Activated B cell treated with CpG ODN at 0.5 μM for 24 hours (primary cell): ENCODE measurements at regions of chr7 and their contacts with region 1.

Region 1: GRCh38 chr7:21898265-21898930 is 47.3 kb downstream of the CDCA7L start:
- DNase-seq: no peak
- ATAC-seq: peak; percentile 92
- H3K4me3 Mint-ChIP-seq: peak overlapping the region; percentile 81
- H3K27ac Mint-ChIP-seq: peak overlapping the region; percentile 97
- H3K4me1 Mint-ChIP-seq: peaks cover 24% of the 10 kb centered on the region
- H3K27me3 Mint-ChIP-seq: no peaks in the 10 kb centered on the region
- CTCF ChIP-seq: no peak

Region 2: DNA sequence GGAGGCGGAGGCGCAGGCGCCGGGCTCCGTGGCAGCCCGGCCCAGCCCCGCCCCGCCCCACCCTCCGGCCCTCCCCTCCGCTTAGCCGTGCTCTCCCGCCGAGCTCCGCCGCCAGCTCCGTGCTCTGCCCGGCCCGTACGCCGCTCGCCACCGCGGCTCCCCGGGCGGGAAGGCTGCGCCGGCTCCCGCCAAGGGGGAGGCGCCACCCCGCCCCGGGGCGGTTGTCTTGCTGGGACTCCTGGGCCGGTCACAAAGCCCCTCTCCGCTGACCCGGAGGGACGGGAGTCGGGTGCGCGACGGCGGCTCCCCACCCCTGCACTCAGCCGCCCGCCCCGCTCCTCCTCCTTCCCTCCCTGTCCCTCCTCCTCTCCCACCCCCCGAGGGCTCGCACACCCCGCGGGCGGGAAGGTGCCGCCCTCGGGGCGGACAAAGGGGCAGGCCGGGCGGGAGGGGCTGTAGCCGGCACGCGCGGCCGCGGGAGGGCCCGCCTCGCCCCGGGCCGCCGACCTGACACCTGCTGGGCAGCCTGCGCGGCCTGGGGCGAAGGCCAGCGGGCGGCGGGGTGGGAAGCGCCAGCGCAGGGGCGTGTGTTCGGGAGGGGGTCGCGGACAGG is 1100.2 kb before region 1 on chr7:
- CTCF ChIA-PET with region 1: no interaction called
- POLR2A ChIA-PET with region 1: no interaction called
- intact Hi-C with region 1: loop called (anchors 5 kb)
- DNase-seq: no peak
- ATAC-seq: peak; percentile 82
- H3K4me3 Mint-ChIP-seq: peak overlapping the region; percentile 76
- H3K27ac Mint-ChIP-seq: no peak overlapping the region
- H3K4me1 Mint-ChIP-seq: peaks cover 22% of the 10 kb centered on the region
- H3K27me3 Mint-ChIP-seq: peaks cover 42% of the 10 kb centered on the region
- CTCF ChIP-seq: no peak

Region 3: GRCh38 chr7:21507626-21508343 is 390.6 kb before region 1 on chr7:
- CTCF ChIA-PET with region 1: no interaction called
- POLR2A ChIA-PET with region 1: no interaction called
- intact Hi-C with region 1: loop called (anchors 10 kb)
- DNase-seq: no peak
- ATAC-seq: no peak
- H3K4me3 Mint-ChIP-seq: no peak overlapping the region
- H3K27ac Mint-ChIP-seq: no peak overlapping the region
- H3K4me1 Mint-ChIP-seq: no peaks in the 10 kb centered on the region
- H3K27me3 Mint-ChIP-seq: no peaks in the 10 kb centered on the region
- CTCF ChIP-seq: no peak

Region 4: DNA sequence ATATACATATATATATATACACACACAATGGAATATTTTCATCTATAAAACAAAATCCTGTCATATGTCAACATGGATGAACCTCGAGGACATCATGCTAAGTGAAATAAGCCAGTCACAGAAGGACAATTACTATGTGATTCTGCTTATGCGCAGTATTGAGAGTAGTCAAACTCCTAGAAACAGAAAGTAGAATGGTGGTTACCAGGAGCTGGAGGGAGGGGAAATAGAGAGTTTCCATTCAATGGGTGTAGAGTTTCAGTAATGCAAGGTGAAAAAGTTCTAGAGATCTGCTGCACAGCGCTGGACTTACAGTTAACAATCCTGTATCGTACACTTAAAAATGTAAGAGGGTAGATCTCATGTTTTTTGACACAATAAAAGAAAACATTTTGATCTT is 134.6 kb before region 1 on chr7:
- CTCF ChIA-PET with region 1: no interaction called
- POLR2A ChIA-PET with region 1: no interaction called
- intact Hi-C with region 1: no loop called
- DNase-seq: no peak
- ATAC-seq: no peak
- H3K4me3 Mint-ChIP-seq: no peak overlapping the region
- H3K27ac Mint-ChIP-seq: no peak overlapping the region
- H3K4me1 Mint-ChIP-seq: no peaks in the 10 kb centered on the region
- H3K27me3 Mint-ChIP-seq: peaks cover 10% of the 10 kb centered on the region
- CTCF ChIP-seq: no peak

Region 5: DNA sequence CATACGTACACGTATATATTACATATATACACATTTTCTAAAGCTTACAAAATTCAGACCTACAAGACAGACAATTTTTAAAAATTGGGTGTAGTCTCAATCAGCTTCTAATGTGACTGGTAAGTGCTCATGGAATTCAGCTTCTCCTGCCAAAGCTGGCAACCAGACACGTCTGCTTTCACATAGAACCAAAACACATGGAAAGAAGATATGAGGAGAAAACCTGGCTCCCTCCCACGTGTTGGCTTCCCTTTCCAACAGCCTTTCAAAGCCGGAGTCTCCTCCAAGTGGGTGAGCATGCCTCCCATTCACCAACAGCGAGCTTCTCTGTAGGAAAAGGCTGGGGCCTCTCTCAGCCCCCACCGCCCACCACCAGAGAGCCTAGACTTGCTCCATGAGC is 13.9 kb after region 1 on chr7:
- CTCF ChIA-PET with region 1: no interaction called
- POLR2A ChIA-PET with region 1: interaction called, 5 read pairs
- intact Hi-C with region 1: loop called (anchors 2 kb)
- DNase-seq: no peak
- ATAC-seq: no peak
- H3K4me3 Mint-ChIP-seq: no peak overlapping the region
- H3K27ac Mint-ChIP-seq: peak overlapping the region; percentile 74
- H3K4me1 Mint-ChIP-seq: peaks cover 43% of the 10 kb centered on the region
- H3K27me3 Mint-ChIP-seq: no peaks in the 10 kb centered on the region
- CTCF ChIP-seq: no peak

Region 6: DNA sequence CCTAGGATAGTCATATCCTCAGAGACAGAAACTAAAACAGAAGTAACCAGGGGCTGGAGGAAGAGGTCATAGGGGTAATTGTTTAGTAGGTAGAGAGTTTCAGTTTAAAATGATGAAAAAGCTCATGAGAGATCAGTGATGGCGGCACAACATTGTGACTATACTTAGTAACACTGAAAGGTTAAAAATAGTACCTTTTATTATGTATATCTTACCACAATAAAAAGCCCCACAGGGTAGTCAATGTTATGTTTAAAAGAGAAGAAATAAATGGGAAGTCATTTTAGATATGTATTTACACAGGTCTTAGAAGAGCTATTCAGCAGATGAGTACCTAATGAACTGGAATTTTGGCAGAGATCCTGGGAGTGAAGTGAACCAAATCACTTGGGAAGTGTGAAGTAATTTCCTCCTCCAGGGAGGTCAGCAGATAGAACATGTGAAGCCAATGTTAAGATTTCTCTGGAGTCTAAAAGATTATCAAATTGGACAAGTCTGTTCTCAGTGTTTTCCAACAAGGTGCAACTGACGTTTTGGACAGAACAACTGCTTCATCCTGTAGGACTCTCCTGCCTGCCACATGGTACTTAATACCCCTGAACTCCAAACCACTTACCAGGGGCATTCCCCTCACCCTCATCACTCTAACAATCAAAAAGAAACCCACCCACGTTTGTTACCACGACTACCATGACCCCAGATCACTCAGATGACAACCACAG is 40.9 kb after region 1 on chr7:
- CTCF ChIA-PET with region 1: no interaction called
- POLR2A ChIA-PET with region 1: interaction called, 4 read pairs
- intact Hi-C with region 1: loop called (anchors 1 kb)
- DNase-seq: no peak
- ATAC-seq: peak; percentile 55
- H3K4me3 Mint-ChIP-seq: peak overlapping the region; percentile 64
- H3K27ac Mint-ChIP-seq: peak overlapping the region; percentile 75
- H3K4me1 Mint-ChIP-seq: peaks cover 93% of the 10 kb centered on the region
- H3K27me3 Mint-ChIP-seq: no peaks in the 10 kb centered on the region
- CTCF ChIP-seq: no peak

Region 7: DNA sequence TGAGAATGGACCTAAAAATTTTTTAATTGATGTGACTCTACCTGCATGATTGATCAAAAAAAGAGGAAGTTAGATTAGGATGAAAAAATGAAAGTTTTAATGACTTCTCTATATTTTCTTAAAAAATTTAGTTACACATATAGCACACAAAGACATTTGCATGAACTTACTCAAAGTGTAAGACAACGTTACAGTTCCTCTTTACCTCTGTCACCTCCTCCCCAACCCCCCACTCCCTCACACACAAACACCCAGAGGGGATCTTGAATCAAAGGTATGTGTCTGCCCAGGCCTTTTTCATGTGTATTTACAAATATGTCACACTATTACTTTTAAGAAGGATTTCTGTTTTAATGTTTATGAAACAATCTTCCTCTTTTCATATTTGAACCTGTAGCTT is 67.9 kb after region 1 on chr7:
- CTCF ChIA-PET with region 1: no interaction called
- POLR2A ChIA-PET with region 1: interaction called, 3 read pairs
- intact Hi-C with region 1: loop called (anchors 1 kb)
- DNase-seq: peak; percentile 31
- ATAC-seq: peak; percentile 97
- H3K4me3 Mint-ChIP-seq: peak overlapping the region; percentile 66
- H3K27ac Mint-ChIP-seq: peak overlapping the region; percentile 87
- H3K4me1 Mint-ChIP-seq: peaks cover 63% of the 10 kb centered on the region
- H3K27me3 Mint-ChIP-seq: no peaks in the 10 kb centered on the region
- CTCF ChIP-seq: no peak

Region 8: GRCh38 chr7:22082886-22083703 is 184.7 kb after region 1 on chr7:
- CTCF ChIA-PET with region 1: no interaction called
- POLR2A ChIA-PET with region 1: no interaction called
- intact Hi-C with region 1: loop called (anchors 5 kb)
- DNase-seq: peak; percentile 91
- ATAC-seq: peak; percentile 97
- H3K4me3 Mint-ChIP-seq: peak overlapping the region; percentile 89
- H3K27ac Mint-ChIP-seq: peak overlapping the region; percentile 70
- H3K4me1 Mint-ChIP-seq: peaks cover 13% of the 10 kb centered on the region
- H3K27me3 Mint-ChIP-seq: peaks cover 25% of the 10 kb centered on the region
- CTCF ChIP-seq: peak; percentile 83